ENCODE measurements at regions of chr2 and their contacts with region 1.

Region 1: GRCh38 chr2:178776751-178777150 is 30.5 kb downstream of the TTN start:
- DNase-seq: no peak
- ATAC-seq: peak; percentile 17 to 28
- H3K4me3 ChIP-seq: no peak overlapping the region
- H3K27ac ChIP-seq: peak overlapping the region in 1 of 4 donors; percentile 67
- H3K4me1 ChIP-seq: peaks cover 77 to 79% of the 10 kb centered on the region in 2 donors
- H3K27me3 ChIP-seq: no peaks in the 10 kb centered on the region
- CTCF ChIP-seq: no peak
- POLR2A ChIP-seq: no peak

Region 2: DNA sequence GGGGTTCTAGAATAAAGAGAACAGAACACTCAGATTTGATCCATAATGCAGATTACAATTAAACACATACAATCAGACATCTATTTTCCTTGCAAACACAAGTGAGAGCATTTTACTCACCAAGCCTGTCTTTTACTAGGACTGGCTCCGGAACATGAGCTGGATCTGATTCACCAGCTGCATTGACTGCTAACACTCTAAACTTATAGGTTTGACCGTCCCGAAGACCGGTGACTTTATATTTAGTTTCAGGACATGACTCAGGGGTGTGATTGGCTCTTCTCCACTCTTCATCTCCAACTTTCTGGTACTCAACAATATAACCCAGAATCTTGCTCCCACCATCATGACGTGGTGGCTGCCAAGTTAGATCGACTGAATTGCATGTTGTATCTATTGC is 184.1 kb before region 1 on chr2:
- in situ Hi-C with region 1: no loop called
- intact Hi-C with region 1: loop called (anchors 10 kb)
- DNase-seq: no peak
- ATAC-seq: peak in 1 of 2 donors; percentile 15
- H3K4me3 ChIP-seq: no peak overlapping the region
- H3K27ac ChIP-seq: peak overlapping the region; percentile 7 to 51 (median 30)
- H3K4me1 ChIP-seq: peaks cover 14 to 21% of the 10 kb centered on the region in 2 donors
- H3K27me3 ChIP-seq: no peaks in the 10 kb centered on the region
- CTCF ChIP-seq: no peak
- POLR2A ChIP-seq: no peak

Region 3: DNA sequence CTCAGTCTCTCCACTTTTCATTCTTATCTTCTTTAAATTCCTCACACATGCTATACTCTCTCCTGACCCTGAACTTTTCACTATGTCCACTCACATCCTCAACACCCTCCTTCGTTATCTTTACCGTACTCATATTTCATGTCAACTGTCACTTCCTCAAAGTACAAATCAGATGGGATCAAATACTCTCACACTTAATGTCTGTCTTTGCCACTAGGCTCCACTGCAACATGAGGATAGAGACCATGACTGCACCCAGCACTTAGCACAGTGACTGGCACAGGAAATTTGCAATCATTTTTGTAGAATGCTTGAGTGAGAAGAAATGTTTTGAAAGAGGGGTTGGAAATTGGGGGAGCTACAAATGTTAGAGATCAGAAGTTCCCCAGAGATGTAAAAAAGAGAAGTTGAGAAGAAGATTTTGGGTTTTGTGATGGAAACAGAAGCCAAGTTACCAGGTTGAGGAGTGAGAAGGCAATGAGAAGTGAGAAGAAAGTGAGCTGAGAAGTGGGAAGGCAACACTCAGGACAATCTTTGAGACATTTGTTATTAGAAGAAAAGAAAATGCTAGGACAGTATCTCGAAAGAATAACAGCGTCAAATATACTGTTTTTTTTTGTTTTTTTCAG is 186.2 kb after region 1 on chr2:
- in situ Hi-C with region 1: no loop called
- intact Hi-C with region 1: no loop called
- DNase-seq: no peak
- ATAC-seq: no peak
- H3K4me3 ChIP-seq: no peak overlapping the region
- H3K27ac ChIP-seq: no peak overlapping the region
- H3K4me1 ChIP-seq: no peaks in the 10 kb centered on the region
- H3K27me3 ChIP-seq: no peaks in the 10 kb centered on the region
- CTCF ChIP-seq: no peak
- POLR2A ChIP-seq: no peak

Region 4: GRCh38 chr2:179201869-179202268 is 425.1 kb after region 1 on chr2:
- in situ Hi-C with region 1: no loop called
- intact Hi-C with region 1: no loop called
- DNase-seq: no peak
- ATAC-seq: no peak
- H3K4me3 ChIP-seq: no peak overlapping the region
- H3K27ac ChIP-seq: no peak overlapping the region
- H3K4me1 ChIP-seq: no peaks in the 10 kb centered on the region
- H3K27me3 ChIP-seq: no peaks in the 10 kb centered on the region
- CTCF ChIP-seq: no peak
- POLR2A ChIP-seq: no peak

Measured in gastrocnemius medialis (tissue), 4 donors.